GM12878 (cell line): ENCODE measurements at regions of chr2 and their contacts with region 1.

Region 1: DNA sequence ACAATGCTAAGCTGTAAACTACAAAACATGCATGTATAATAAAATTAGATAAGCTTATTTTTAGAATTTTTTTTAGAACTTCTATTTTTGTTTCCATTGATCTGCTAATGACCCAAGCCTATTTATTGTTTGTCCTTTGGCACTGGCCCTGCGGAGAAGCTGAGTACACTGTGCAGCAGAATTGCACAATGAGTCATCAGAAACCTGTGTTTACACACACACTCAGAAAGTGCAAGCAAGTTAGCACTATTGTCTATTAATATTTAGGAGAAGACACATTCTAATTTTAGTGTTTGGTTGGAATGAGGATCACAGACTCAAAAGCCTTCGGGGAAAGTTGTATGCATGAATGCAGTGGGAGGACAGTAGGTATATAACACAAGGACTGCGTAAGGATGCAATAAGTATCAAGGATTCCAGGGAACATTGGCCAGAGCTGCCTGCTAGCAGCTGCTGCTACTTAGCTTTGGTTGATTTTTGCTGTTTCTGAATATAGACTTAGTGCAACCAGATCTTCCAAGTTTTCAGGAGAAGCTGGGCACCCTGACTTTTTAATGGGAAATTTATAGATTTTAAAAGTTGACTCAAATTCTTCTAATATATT is 128.2 kb downstream of the KCNH7 start:
- DNase-seq: no peak
- ATAC-seq: peak; percentile 53; the same call in 2 of the 3 replicates
- H3K4me3 ChIP-seq: no peak overlapping the region
- H3K27ac ChIP-seq: no peak overlapping the region
- H3K4me1 ChIP-seq: no peaks in the 10 kb centered on the region
- H3K27me3 ChIP-seq: no peaks in the 10 kb centered on the region
- CTCF ChIP-seq: no peak
- EP300 ChIP-seq: no peak
- POLR2A ChIP-seq: no peak
- RAD21 ChIP-seq: no peak

Region 2: GRCh38 chr2:162720559-162721271 is 10.3 kb after region 1 on chr2:
- CTCF ChIA-PET with region 1: interaction called, 5 read pairs
- POLR2A ChIA-PET with region 1: interaction called, 3 read pairs
- RAD21 ChIA-PET with region 1: interaction called, 5 read pairs
- SMC1A ChIA-PET with region 1: interaction called, 31 read pairs
- in situ Hi-C with region 1: no loop called
- intact Hi-C with region 1: no loop called
- DNase-seq: no peak
- ATAC-seq: peak; percentile 77
- H3K4me3 ChIP-seq: no peak overlapping the region
- H3K27ac ChIP-seq: no peak overlapping the region
- H3K4me1 ChIP-seq: no peaks in the 10 kb centered on the region
- H3K27me3 ChIP-seq: no peaks in the 10 kb centered on the region
- CTCF ChIP-seq: no peak
- EP300 ChIP-seq: no peak
- POLR2A ChIP-seq: no peak
- RAD21 ChIP-seq: no peak

Region 3: DNA sequence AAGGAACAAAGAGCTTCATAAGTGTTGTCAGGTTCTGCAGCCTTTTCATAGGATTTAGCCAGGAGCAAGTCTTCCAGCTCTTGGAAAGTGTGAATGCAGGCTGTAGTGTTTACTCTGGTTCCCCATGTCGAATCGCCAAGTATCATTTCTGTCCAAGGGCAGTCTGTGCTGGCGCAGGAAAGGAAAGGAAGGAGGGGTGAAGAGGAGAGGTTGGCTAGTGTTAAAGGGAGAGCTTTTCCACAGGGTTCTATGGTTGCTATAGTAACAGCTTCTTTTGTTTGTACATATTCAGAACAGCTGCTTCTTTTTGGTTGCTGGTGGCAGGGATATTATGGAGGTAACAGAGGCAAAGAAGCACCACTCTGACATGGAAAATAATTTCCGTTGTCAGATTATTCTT is 58.3 kb after region 1 on chr2:
- CTCF ChIA-PET with region 1: interaction called, 3 read pairs
- POLR2A ChIA-PET with region 1: no interaction called
- RAD21 ChIA-PET with region 1: interaction called, 6 read pairs
- SMC1A ChIA-PET with region 1: interaction called, 39 read pairs
- in situ Hi-C with region 1: no loop called
- intact Hi-C with region 1: no loop called
- DNase-seq: no peak
- ATAC-seq: no peak
- H3K4me3 ChIP-seq: no peak overlapping the region
- H3K27ac ChIP-seq: no peak overlapping the region
- H3K4me1 ChIP-seq: no peaks in the 10 kb centered on the region
- H3K27me3 ChIP-seq: no peaks in the 10 kb centered on the region
- CTCF ChIP-seq: no peak
- EP300 ChIP-seq: no peak
- POLR2A ChIP-seq: no peak
- RAD21 ChIP-seq: no peak

Region 4: GRCh38 chr2:162795312-162795711 is 84.9 kb after region 1 on chr2:
- CTCF ChIA-PET with region 1: no interaction called
- POLR2A ChIA-PET with region 1: interaction called, 4 read pairs
- RAD21 ChIA-PET with region 1: interaction called, 3 read pairs
- SMC1A ChIA-PET with region 1: interaction called, 11 read pairs
- in situ Hi-C with region 1: no loop called
- intact Hi-C with region 1: no loop called
- DNase-seq: no peak
- ATAC-seq: peak; percentile 59; the same call in 2 of the 3 replicates
- H3K4me3 ChIP-seq: no peak overlapping the region
- H3K27ac ChIP-seq: no peak overlapping the region
- H3K4me1 ChIP-seq: no peaks in the 10 kb centered on the region
- H3K27me3 ChIP-seq: no peaks in the 10 kb centered on the region
- CTCF ChIP-seq: peak; percentile 17 to 42 (median 40); a peak in 4 of 6 replicates
- EP300 ChIP-seq: no peak
- POLR2A ChIP-seq: no peak
- RAD21 ChIP-seq: peak; percentile 72

Region 5: DNA sequence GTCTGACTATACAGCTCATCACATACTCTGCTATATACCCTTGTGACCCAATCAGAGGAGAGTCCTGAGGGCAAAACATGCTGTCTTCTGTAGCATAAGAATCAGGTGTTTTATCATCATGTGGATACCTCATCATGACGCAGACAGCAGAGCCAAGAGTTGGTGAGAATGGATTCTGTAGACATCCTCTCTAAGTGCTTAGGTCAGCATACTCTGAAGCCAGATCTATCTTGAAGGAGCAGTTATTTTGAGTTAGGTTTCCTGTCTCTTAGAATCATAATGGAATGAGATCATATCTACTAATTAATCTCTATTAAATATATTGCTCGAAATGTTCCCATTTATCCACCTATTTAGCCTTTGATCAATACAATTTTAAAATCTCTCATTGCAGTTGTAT is 318.4 kb after region 1 on chr2:
- CTCF ChIA-PET with region 1: no interaction called
- POLR2A ChIA-PET with region 1: no interaction called
- RAD21 ChIA-PET with region 1: no interaction called
- SMC1A ChIA-PET with region 1: no interaction called
- in situ Hi-C with region 1: no loop called
- intact Hi-C with region 1: no loop called
- DNase-seq: no peak
- ATAC-seq: no peak
- H3K4me3 ChIP-seq: no peak overlapping the region
- H3K27ac ChIP-seq: no peak overlapping the region
- H3K4me1 ChIP-seq: no peaks in the 10 kb centered on the region
- H3K27me3 ChIP-seq: no peaks in the 10 kb centered on the region
- CTCF ChIP-seq: no peak
- EP300 ChIP-seq: no peak
- POLR2A ChIP-seq: no peak
- RAD21 ChIP-seq: no peak